Activated CD4-positive, alpha-beta T cell treated with anti-CD3 and anti-CD28 coated beads for 36 hours (primary cell): ENCODE measurements at regions of chr18 and their contacts with region 1.

Region 1: GRCh38 chr18:812376-813171 is 532 bp upstream of the YES1 start:
- DNase-seq: peak; percentile 85
- ATAC-seq: peak; percentile 65
- H3K4me3 Mint-ChIP-seq: peak overlapping the region; percentile 87
- H3K27ac Mint-ChIP-seq: peak overlapping the region; percentile 99
- H3K4me1 Mint-ChIP-seq: peaks cover 58% of the 10 kb centered on the region
- H3K27me3 Mint-ChIP-seq: no peaks in the 10 kb centered on the region

Region 2: DNA sequence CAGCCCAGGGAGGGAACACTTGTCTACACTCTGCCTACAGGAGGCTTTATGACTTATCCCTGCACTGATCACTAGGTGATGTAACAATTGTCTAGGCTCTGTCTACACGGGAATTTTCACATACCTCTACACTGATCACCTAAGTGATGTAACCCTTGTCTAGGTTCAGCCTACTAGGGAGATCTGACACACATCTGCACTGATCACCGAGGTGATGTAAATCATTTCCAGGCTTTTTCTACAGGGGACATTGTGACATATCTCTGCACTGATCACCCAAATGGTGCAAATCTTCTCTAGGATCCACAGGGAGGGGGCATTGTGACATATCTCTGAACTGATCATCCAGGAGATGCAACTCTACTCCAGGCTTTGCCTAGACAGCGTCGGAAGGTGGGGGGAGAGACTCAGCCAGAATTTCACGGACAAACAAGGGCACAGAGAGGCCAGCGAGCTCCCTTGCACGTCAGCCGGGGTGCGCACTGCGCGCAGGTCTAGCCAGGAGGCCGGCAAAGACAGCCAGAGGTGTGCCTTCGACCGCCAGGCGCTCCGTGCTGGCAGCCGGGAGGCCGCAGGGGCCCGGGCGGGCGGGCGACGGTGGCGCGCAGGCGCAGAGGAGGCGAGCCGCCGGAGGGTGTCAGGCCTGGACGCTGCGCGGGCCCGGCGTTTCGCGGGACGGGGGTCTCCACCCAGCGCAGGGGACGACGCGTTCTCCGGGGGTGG is 701.1 kb before region 1 on chr18:
- CTCF ChIA-PET with region 1: no interaction called
- POLR2A ChIA-PET with region 1: no interaction called
- intact Hi-C with region 1: loop called in 1 of 2 experiments (anchors 2 kb)
- DNase-seq: peak; percentile 80
- ATAC-seq: peak; percentile 64
- H3K4me3 Mint-ChIP-seq: peak overlapping the region; percentile 69
- H3K27ac Mint-ChIP-seq: peak overlapping the region; percentile 88
- H3K4me1 Mint-ChIP-seq: peaks cover 12% of the 10 kb centered on the region
- H3K27me3 Mint-ChIP-seq: no peaks in the 10 kb centered on the region

Region 3: GRCh38 chr18:267688-268552 is 544.7 kb before region 1 on chr18 and contains the start of gene THOC1:
- CTCF ChIA-PET with region 1: no interaction called
- POLR2A ChIA-PET with region 1: no interaction called
- intact Hi-C with region 1: loop called (anchors 1 to 5 kb)
- DNase-seq: peak; percentile 98
- ATAC-seq: peak; percentile 92
- H3K4me3 Mint-ChIP-seq: peak within 1 kb of the TSS; percentile 100
- H3K27ac Mint-ChIP-seq: peak within 1 kb of the TSS; percentile 100
- H3K4me1 Mint-ChIP-seq: peaks cover 39% of the 10 kb centered on the region
- H3K27me3 Mint-ChIP-seq: no peaks in the 10 kb centered on the region
- total RNA-seq, gene THOC1: 62.1 to 64.6 TPM

Region 4: DNA sequence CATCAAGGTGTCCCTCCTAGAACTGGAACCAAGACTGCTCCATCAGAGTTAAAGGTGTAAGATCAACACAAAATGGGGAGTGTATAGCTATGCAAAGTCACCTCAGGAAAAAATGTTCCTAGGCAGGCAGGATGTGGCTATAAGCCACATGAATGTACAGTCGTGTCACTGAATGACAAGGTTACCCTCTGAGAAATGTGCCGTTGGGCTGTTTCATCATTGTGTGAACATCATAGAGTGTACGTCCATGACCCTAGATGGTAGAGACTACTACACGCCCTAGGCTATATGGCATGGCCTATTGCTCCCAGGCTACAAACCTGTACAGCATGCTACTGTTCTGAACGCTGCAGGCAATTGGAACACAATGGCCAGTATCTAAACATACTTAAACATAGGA is 130.6 kb before region 1 on chr18:
- CTCF ChIA-PET with region 1: no interaction called
- POLR2A ChIA-PET with region 1: no interaction called
- intact Hi-C with region 1: loop called in 1 of 2 experiments (anchors 1 kb)
- DNase-seq: peak; percentile 76
- ATAC-seq: peak; percentile 96
- H3K4me3 Mint-ChIP-seq: no peak overlapping the region
- H3K27ac Mint-ChIP-seq: peak overlapping the region; percentile 84
- H3K4me1 Mint-ChIP-seq: peaks cover 22% of the 10 kb centered on the region
- H3K27me3 Mint-ChIP-seq: no peaks in the 10 kb centered on the region

Region 5: DNA sequence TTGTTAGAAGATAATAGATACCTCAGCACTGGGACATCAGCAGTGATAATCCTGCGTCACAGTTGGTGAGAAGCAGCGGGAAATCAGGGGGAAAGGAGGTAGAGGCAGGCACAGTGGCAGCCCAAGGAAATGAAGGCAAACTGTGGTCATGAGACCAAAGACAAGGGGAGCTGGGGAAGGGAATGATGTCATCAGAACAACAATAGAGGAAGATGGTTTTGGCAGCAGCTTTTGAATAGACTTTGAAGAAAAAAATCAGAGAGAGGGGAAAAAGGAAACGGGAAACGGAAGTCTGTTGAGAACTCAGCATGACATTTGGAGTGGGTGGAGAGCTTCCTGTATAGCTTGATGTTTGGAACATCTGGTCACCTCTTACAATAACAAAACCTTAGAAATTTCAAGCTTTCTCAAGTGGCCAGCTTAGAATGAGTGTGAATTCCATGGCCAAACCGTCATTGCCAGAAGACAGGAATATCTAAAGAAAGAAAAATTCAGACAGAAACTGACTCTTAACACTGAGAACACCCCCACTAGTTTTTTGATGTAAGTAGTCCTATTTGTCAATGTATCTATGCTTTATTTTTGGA is 17.8 kb after region 1 on chr18:
- CTCF ChIA-PET with region 1: interaction called, 22 read pairs
- POLR2A ChIA-PET with region 1: interaction called, 8 read pairs
- intact Hi-C with region 1: loop called (anchors 1 kb)
- DNase-seq: peak; percentile 28
- ATAC-seq: peak; percentile 63
- H3K4me3 Mint-ChIP-seq: peak overlapping the region; percentile 29
- H3K27ac Mint-ChIP-seq: peak overlapping the region; percentile 69
- H3K4me1 Mint-ChIP-seq: peaks cover 27% of the 10 kb centered on the region
- H3K27me3 Mint-ChIP-seq: no peaks in the 10 kb centered on the region

Region 6: DNA sequence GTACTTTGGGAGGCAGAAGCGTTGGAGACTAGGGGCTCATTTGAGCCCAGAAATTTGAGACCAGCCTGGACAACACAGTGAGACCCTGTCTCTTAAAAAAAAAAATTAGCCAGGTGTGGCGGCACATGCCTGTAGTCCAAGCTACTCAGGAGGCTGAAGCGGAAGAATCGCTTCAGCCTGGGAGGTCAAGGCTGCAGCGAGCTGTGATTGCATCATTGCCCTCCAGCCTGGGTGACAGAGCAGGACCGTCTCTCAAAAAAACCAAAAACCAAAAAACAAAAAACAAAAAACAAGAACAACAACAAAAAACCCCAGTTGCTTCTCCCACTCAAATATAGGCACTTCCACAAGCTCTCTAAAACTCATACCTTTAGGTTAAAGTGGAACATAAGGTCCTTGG is 64.7 kb after region 1 on chr18:
- CTCF ChIA-PET with region 1: no interaction called
- POLR2A ChIA-PET with region 1: no interaction called
- intact Hi-C with region 1: no loop called
- DNase-seq: no peak
- ATAC-seq: no peak
- H3K4me3 Mint-ChIP-seq: no peak overlapping the region
- H3K27ac Mint-ChIP-seq: no peak overlapping the region
- H3K4me1 Mint-ChIP-seq: peaks cover 7% of the 10 kb centered on the region
- H3K27me3 Mint-ChIP-seq: peaks cover 4% of the 10 kb centered on the region

Region 7: GRCh38 chr18:1002653-1003178 is 190.1 kb after region 1 on chr18:
- CTCF ChIA-PET with region 1: no interaction called
- POLR2A ChIA-PET with region 1: no interaction called
- intact Hi-C with region 1: no loop called
- DNase-seq: no peak
- ATAC-seq: no peak
- H3K4me3 Mint-ChIP-seq: no peak overlapping the region
- H3K27ac Mint-ChIP-seq: no peak overlapping the region
- H3K4me1 Mint-ChIP-seq: no peaks in the 10 kb centered on the region
- H3K27me3 Mint-ChIP-seq: no peaks in the 10 kb centered on the region

Region 8: GRCh38 chr18:1075322-1075721 is 262.7 kb after region 1 on chr18:
- CTCF ChIA-PET with region 1: no interaction called
- POLR2A ChIA-PET with region 1: no interaction called
- intact Hi-C with region 1: no loop called
- DNase-seq: no peak
- ATAC-seq: no peak
- H3K4me3 Mint-ChIP-seq: no peak overlapping the region
- H3K27ac Mint-ChIP-seq: no peak overlapping the region
- H3K4me1 Mint-ChIP-seq: no peaks in the 10 kb centered on the region
- H3K27me3 Mint-ChIP-seq: no peaks in the 10 kb centered on the region

Region 9: DNA sequence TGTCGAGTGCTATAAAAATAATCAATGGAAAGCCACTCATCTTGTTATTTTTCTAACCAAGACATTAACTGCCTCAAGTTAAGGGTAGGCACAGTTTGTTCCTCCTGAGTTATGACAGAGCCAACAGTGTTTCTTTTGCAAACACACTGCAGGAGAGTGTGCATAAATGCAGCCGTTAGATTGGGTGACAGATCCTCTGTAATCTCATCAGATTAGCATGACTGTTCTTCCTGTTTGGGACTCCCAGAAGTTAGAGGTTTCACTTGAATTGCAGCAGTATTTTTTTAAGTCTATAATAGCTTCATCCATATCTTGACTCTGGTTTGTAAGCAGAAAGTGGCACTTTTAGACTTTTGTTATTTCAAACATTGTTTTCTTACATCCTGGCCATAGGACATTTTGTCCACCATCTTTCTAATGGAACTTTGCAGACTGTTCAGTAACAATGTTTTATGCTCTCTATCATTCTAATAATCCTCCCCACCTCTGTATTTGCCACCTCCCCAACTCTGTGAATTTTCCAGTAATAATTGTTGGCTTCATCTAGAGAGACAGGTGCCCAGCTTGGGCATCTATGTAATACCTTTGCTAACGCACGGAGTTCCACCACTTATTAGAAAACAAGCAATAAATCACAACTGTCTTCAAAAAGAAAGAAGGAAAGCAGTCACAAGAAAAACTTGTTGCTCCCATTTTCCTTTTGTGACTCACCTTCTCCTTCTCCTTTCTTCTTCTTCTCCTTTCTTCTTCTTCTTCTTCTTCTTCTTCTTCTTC is 652.1 kb after region 1 on chr18:
- CTCF ChIA-PET with region 1: no interaction called
- POLR2A ChIA-PET with region 1: no interaction called
- intact Hi-C with region 1: no loop called
- DNase-seq: no peak
- ATAC-seq: no peak
- H3K4me3 Mint-ChIP-seq: no peak overlapping the region
- H3K27ac Mint-ChIP-seq: no peak overlapping the region
- H3K4me1 Mint-ChIP-seq: no peaks in the 10 kb centered on the region
- H3K27me3 Mint-ChIP-seq: no peaks in the 10 kb centered on the region